WTC11 (cell line): ENCODE measurements at regions of chr9 and their contacts with region 1.

Region 1: GRCh38 chr9:108565651-108566378 is 290.0 kb downstream of the ACTL7B start:
- DNase-seq: peak; percentile 31
- ATAC-seq: peak; percentile 96
- H3K4me3 Mint-ChIP-seq: no peak overlapping the region
- H3K27ac Mint-ChIP-seq: no peak overlapping the region
- H3K4me1 Mint-ChIP-seq: peaks cover 14% of the 10 kb centered on the region
- H3K27me3 Mint-ChIP-seq: no peaks in the 10 kb centered on the region; the same call in 1 of the 2 replicates
- CTCF ChIP-seq: 0 out of 2 replicates have a peak, but pooled peaks have one; percentile 25

Region 2: DNA sequence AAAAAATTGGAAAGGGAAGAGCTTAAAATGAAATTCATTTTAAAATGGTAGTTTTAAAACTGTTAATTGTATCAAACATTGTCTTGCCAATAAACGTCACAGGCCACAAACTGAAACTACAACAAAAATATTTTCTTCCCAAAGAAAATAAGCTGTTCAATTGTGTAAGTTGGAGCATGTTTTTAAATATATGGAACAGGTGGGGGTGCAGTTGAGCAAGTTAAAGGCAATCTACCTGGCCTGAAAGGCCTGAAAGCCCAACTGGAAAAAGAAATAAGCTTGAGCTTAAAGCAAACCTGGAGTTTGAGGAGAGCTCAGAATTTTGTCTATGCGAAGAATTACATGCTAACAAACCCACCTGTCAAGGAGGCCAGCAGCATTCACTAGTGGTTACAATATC is 149.5 kb before region 1 on chr9:
- CTCF ChIA-PET with region 1: interaction called, 12 read pairs
- POLR2A ChIA-PET with region 1: no interaction called
- DNase-seq: no peak
- ATAC-seq: peak; percentile 43; the same call in 1 of the 2 replicates
- H3K4me3 Mint-ChIP-seq: no peak overlapping the region
- H3K27ac Mint-ChIP-seq: no peak overlapping the region
- H3K4me1 Mint-ChIP-seq: peaks cover 6% of the 10 kb centered on the region; the same call in 1 of the 2 replicates
- H3K27me3 Mint-ChIP-seq: no peaks in the 10 kb centered on the region
- CTCF ChIP-seq: no peak

Region 3: GRCh38 chr9:108496846-108497245 is 69.0 kb before region 1 on chr9:
- CTCF ChIA-PET with region 1: no interaction called
- POLR2A ChIA-PET with region 1: no interaction called
- DNase-seq: no peak
- ATAC-seq: no peak
- H3K4me3 Mint-ChIP-seq: no peak overlapping the region
- H3K27ac Mint-ChIP-seq: no peak overlapping the region
- H3K4me1 Mint-ChIP-seq: peaks cover 7% of the 10 kb centered on the region
- H3K27me3 Mint-ChIP-seq: peaks cover 4% of the 10 kb centered on the region; the same call in 1 of the 2 replicates
- CTCF ChIP-seq: no peak

Region 4: GRCh38 chr9:108515856-108516255 is 50.0 kb before region 1 on chr9:
- CTCF ChIA-PET with region 1: interaction called, 10 read pairs
- POLR2A ChIA-PET with region 1: no interaction called
- DNase-seq: peak; percentile 28
- ATAC-seq: peak; percentile 91
- H3K4me3 Mint-ChIP-seq: no peak overlapping the region
- H3K27ac Mint-ChIP-seq: no peak overlapping the region
- H3K4me1 Mint-ChIP-seq: no peaks in the 10 kb centered on the region; the same call in 1 of the 2 replicates
- H3K27me3 Mint-ChIP-seq: no peaks in the 10 kb centered on the region
- CTCF ChIP-seq: no peak

Region 5: GRCh38 chr9:108761655-108762347 is 196.0 kb after region 1 on chr9:
- CTCF ChIA-PET with region 1: interaction called, 10 read pairs
- POLR2A ChIA-PET with region 1: no interaction called
- DNase-seq: peak; percentile 65
- ATAC-seq: peak; percentile 94
- H3K4me3 Mint-ChIP-seq: no peak overlapping the region
- H3K27ac Mint-ChIP-seq: no peak overlapping the region
- H3K4me1 Mint-ChIP-seq: peaks cover 15% of the 10 kb centered on the region
- H3K27me3 Mint-ChIP-seq: no peaks in the 10 kb centered on the region
- CTCF ChIP-seq: peak; percentile 79